Activated CD8-positive, alpha-beta memory T cell treated with anti-CD3 and anti-CD28 coated beads, Interleukin-2, amount 10 ng/mL, durations not matched to agents 7 days and 5 days (primary cell): ENCODE measurements at regions of chr20 and their contacts with region 1.

Region 1: DNA sequence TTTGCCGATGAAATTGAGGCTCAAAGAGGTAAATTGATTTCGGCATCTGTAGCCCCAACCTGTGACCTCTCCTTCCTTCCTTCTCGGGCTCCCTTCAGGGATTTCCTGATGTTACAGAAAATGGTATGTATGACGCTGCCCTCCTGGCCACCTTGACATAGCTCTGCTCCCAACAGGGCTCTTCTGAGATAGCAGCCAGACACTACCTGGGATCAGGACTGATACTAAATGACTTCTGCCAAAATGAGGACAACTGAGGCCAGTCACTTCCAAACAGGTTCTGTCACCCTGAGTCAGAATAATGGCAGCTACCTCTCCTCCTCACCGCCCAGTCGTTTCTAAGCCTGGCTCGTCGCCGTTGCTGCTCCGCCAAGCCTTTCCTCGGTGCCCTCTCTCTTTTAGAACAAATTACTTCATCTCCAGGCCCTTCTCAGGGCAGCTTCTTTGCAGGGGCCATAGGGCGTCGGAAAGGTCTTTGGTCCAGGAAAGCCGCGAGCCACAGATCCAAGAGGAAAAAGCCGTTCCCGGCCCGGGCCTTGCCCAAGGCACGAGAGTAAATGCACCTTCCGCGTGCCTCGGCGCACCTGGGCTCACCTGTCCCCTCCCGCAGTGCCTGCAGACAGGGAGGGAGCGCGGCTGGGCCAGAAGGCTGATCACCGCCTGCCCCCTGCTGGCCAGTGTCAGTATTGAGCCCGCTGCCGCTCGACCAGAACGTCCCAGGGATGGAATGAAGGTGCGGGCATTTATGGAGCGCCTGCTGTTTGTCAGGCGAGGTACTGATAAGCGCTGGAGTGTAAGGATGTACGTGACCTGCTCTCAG is 904 bp upstream of the LPIN3 start:
- DNase-seq: peak; percentile 86
- ATAC-seq: peak; percentile 93
- H3K4me3 Mint-ChIP-seq: peak overlapping the region; percentile 70
- H3K27ac Mint-ChIP-seq: peak overlapping the region; percentile 54
- H3K4me1 Mint-ChIP-seq: peaks cover 11% of the 10 kb centered on the region
- H3K27me3 Mint-ChIP-seq: peaks cover 11% of the 10 kb centered on the region

Region 2: GRCh38 chr20:41119546-41120235 is 220.0 kb before region 1 on chr20:
- CTCF ChIA-PET with region 1: interaction called, 10 read pairs
- DNase-seq: no peak
- ATAC-seq: no peak
- H3K4me3 Mint-ChIP-seq: no peak overlapping the region
- H3K27ac Mint-ChIP-seq: no peak overlapping the region
- H3K4me1 Mint-ChIP-seq: peaks cover 14% of the 10 kb centered on the region
- H3K27me3 Mint-ChIP-seq: no peaks in the 10 kb centered on the region

Region 3: DNA sequence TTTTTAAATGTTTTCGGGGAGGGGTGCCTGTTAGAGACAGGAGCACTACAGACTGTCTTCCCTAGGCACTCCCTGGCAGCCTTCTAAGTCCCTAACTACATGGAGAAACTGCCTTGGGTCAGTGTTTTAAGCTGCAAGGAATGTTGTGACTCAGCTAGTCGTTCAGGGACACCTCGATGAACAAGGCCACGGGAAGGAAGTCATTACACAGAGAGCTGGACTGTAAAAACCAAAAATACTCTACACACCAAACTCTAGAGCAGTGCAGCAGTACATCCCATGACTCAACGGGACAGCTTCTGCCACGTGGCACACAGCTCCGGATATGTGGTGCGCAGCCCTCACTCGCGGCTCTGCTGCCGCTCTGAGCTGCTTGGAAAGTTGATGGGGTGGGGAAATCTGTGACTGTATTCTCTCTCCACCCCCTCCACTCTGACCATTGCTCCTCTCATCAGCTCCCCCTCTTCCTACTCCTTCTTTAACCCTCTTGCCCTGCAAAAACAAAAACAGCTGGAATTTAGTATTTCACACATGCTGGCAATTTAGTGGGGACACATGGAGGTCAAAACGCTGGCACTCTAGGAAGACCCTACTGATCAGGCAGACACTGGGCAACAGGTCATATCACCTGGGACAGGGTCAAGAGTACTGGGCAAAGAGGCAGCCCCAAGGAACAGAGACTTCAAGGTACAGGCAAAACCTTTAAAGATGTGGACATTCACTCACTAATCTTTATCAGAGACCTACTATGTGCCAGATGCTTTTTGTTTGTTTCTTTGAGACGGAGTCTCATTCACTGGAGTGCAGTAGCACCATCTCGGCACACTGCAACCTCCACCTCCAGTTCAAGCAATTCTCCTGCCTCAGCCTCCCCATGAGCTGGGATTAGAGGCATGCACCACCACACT is 10.0 kb before region 1 on chr20:
- CTCF ChIA-PET with region 1: interaction called, 26 read pairs
- DNase-seq: peak; percentile 81
- ATAC-seq: peak; percentile 100
- H3K4me3 Mint-ChIP-seq: no peak overlapping the region
- H3K27ac Mint-ChIP-seq: peak overlapping the region; percentile 61
- H3K4me1 Mint-ChIP-seq: peaks cover 14% of the 10 kb centered on the region
- H3K27me3 Mint-ChIP-seq: peaks cover 3% of the 10 kb centered on the region